Aorta (tissue), 5 donors: ENCODE measurements at regions of chr12 and their contacts with region 1.

Region 1: DNA sequence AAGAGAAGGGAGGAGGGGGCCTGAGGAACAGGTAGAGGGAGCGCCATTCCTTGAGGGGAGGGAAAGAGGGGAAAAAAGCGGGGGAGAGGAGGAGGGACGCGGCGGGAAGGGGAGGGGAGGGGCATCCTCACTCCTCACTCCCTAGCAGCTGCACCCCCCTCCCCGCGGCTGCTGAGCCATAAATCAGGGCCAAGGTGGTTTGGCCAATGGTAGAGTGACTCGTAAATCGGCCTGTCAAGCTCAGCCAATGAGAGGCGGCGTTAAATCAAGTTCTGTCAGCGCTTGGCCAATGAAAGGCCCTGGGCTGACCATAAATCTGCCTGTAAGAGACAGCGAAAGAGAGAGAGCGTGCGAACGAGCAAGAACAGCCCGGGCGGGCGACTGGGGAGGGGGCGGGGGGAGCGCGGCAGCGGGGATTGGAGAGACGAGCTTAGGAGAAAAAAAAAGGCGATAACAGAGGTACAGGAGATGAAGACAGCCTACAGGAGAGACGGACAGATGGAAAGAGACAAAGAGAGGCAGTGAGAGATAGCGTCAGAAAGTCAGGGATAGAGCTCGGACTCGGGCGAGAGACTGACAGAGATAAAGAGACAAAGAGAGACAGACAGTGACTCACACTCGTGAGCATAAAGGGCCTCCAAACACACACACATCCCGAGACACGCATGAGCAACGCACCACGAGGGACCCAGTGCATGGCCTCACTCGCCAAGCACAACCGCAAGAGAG is 5.1 kb downstream of the GPR84 start:
- DNase-seq: peak; percentile 96 to 97
- ATAC-seq: peak; percentile 95
- H3K4me3 ChIP-seq: peak overlapping the region; percentile 31 to 40
- H3K27ac ChIP-seq: peak overlapping the region; percentile 9 to 75
- H3K4me1 ChIP-seq: no peaks in the 10 kb centered on the region
- H3K27me3 ChIP-seq: no peaks in the 10 kb centered on the region

Region 2: DNA sequence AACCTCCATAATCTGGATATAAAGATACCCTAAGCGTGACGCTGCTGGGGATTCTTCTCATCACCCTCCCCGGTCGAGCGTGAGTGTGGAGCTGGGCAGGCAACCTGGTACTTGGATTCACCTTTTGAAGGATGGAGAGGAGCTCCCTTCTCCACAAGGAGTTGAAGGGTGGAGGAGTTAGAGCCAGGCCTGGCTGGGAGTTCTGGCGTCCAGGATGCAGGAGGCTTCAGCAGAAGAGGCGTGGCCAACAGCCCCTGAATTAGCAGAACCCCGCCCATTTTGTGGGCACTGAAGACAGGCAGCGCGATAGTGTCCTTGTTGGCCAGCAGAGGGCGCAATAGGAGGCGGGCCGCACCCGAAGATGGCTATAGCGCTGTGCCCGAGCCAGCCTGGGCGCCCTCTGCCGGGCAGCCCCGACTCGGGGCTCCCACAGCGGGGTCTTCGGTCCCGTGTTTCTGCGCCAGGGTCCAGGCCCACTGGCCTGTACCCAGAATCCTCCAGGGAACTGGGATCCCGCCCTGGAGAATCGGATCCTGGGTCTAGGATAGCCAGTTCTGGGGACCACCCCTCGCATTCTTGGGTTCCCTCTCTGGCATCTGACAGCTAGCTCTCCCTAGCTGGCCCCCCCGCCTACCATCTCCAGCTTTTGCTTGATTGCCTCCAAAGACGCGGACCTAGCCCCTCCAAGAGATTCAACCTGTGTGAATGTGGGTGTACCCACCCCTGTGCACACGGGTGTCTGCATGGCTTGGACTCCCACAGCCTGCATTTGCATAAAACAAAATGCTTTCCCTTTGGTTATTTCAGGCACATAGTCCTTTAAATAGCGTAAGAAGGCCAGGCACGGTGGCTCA is 144.4 kb before region 1 on chr12:
- intact Hi-C with region 1: loop called in 1 of 2 experiments (anchors 5 kb)
- DNase-seq: peak; percentile 93 to 96
- ATAC-seq: peak; percentile 93
- H3K4me3 ChIP-seq: no peak overlapping the region
- H3K27ac ChIP-seq: no peak overlapping the region
- H3K4me1 ChIP-seq: no peaks in the 10 kb centered on the region
- H3K27me3 ChIP-seq: no peaks in the 10 kb centered on the region

Region 3: DNA sequence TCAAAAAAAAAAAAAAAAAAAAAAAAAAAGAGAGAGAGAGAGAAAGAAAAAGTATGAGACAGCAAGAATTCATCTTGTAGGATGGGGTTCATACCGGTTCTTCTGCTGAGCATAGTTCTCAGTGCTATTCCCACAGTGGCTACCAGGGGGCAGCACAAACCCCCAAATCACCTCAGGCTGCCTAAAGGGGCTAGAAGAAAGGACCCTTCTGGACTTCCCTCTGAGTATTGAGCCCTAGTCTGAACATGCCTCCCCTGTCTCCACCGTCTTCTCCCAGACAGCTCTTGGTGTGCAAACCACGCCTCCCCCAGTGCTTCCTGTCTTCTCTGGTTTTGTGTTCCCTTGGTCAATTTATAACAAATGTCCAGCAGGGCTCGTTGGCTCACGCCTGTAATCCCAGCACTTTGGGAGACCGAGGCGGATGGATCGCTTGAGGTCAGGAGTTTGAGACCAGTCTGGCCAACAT is 139.1 kb before region 1 on chr12:
- intact Hi-C with region 1: loop called (anchors 2 to 5 kb)
- DNase-seq: peak; percentile 68 to 87
- ATAC-seq: peak; percentile 72
- H3K4me3 ChIP-seq: no peak overlapping the region
- H3K27ac ChIP-seq: no peak overlapping the region
- H3K4me1 ChIP-seq: no peaks in the 10 kb centered on the region
- H3K27me3 ChIP-seq: no peaks in the 10 kb centered on the region

Region 4: DNA sequence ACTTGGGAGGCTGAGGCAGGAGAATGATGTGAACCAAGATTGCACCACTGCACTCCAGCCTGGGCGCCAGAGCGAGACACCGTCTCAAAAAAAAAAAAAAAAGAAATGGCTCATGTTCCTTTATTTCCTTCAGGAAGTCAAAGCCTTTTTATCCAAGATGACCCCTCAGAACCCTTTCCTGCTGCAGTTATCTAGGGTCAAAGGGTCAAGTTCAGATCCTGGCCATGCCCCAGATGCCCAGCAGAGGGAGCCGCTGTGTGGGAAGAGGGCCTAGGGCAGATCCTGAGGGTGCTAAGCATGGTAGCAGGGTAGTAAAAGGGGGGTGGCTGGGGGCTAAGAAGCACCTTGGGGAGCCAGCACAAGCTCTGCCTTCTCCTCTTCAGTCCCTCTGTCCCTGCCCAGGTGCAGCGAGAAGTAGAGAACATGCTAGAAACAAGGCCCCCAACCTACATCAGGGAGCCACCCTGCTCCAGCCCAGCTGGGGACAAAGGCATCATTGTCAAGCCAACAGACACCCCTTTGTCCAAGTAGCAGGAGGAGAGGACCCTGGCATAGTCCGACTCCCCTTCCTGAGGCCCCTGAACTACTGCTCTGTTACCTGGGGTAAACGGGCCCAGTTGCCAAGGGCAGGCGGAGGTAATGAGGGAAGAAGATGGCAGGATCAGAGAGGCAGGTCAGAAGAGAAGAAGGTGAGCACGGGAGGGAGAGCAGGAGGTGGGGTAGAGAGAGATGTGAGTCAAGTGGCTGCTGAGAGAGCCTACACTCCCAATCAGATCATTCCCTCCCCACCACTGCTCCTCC is 64.8 kb before region 1 on chr12:
- intact Hi-C with region 1: loop called (anchors 1 to 5 kb)
- DNase-seq: peak; percentile 72 to 84
- ATAC-seq: peak; percentile 77
- H3K4me3 ChIP-seq: no peak overlapping the region
- H3K27ac ChIP-seq: no peak overlapping the region
- H3K4me1 ChIP-seq: no peaks in the 10 kb centered on the region
- H3K27me3 ChIP-seq: no peaks in the 10 kb centered on the region

Region 5: GRCh38 chr12:54299515-54300261 is 59.5 kb before region 1 on chr12:
- intact Hi-C with region 1: loop called (anchors 1 to 5 kb)
- DNase-seq: no peak
- ATAC-seq: no peak
- H3K4me3 ChIP-seq: no peak overlapping the region
- H3K27ac ChIP-seq: no peak overlapping the region
- H3K4me1 ChIP-seq: no peaks in the 10 kb centered on the region
- H3K27me3 ChIP-seq: peaks cover 0 to 1% of the 10 kb centered on the region in 2 donors

Region 6: DNA sequence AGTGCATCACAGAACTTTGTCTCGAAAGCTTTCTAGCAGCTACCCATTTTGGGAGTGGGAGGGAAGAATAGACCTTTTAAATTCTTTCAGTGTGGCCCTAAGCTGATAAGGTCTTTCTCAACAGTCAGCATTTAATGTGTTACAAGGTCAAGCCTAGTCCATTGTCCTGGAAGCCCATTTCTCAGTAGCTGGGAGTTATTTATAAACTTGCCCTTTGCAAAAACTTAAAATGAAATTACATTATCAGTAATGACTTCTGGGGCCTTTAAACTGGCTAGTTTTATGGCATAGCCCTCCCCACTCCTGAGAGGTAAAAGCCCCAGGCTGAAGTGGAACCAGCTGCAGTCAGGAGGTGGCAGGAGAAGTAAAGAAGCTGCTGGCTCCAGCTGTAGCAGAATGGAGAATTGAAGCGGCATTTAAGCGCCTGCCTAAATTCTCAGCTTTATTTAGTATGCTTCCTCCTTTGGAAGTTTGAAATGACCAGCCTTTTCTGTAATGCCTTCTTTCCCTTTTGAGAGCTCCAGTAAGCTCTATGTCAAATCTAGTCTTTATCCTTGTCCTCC is 21.8 kb before region 1 on chr12:
- intact Hi-C with region 1: loop called in 1 of 2 experiments (anchors 2 kb)
- DNase-seq: no peak
- ATAC-seq: peak; percentile 62
- H3K4me3 ChIP-seq: no peak overlapping the region
- H3K27ac ChIP-seq: no peak overlapping the region
- H3K4me1 ChIP-seq: peaks cover 2 to 4% of the 10 kb centered on the region in 2 donors
- H3K27me3 ChIP-seq: no peaks in the 10 kb centered on the region